ENCODE measurements at regions of chr1 and their contacts with region 1.

Region 1: DNA sequence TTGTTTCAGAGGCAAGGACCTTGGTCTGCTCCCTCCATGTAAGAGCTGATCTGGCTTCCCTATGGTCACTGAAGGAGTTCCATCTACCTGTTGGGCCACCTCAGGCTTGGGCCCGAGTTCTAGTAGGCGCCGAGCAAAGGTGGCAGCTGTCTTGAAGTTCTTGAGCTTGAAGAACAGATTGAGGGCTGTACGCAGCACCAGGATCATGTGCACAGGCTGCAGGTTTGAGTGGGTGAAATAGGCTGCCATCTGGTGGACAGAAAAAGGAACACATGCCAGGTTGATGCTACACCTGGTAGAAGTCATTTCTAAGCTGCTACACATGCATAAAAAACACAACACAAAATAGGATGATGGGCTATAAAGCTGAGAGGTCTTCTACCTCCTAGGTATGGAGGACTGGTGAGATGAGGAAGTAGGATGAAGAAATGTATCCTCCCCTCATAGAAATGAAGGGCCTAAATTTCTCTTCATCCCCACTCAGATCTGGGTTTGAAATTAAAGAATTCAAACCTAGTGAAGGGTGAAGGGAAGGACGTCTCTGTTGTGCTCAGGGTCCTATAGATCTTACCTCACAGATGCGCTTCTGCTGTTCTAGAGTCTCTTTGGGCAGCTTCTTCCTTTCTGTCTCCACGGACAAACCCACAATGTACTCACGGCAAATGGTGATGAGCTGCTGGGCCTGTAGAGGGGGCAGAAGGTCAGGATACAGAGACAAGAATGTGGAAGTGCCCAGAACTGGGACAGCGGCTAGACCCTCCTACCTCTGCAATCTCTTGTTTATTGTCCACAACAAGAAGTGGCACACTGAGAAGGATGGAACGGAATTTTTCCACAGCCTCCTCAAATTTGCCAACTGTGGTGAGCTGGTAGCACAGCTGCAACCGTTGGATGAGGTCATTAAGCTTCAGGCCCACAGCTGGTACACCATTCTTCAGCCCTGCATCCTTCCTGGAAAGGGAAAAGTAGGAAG is 6.6 kb upstream of the PEX19 start:
- DNase-seq: no peak
- H3K4me3 ChIP-seq: no peak overlapping the region
- CTCF ChIP-seq: peak; percentile 75

Region 2: GRCh38 chr1:160085686-160086455 is 205.7 kb before region 1 on chr1:
- CTCF ChIA-PET with region 1: interaction called, 32 read pairs
- POLR2A ChIA-PET with region 1: no interaction called
- DNase-seq: no peak
- H3K4me3 ChIP-seq: no peak overlapping the region
- CTCF ChIP-seq: peak; percentile 91

Region 3: GRCh38 chr1:160161965-160162705 is 129.4 kb before region 1 on chr1:
- CTCF ChIA-PET with region 1: interaction called, 11 read pairs
- POLR2A ChIA-PET with region 1: no interaction called
- DNase-seq: no peak
- H3K4me3 ChIP-seq: no peak overlapping the region
- CTCF ChIP-seq: peak; percentile 64

Region 4: GRCh38 chr1:160219062-160219929 is 72.2 kb before region 1 on chr1:
- CTCF ChIA-PET with region 1: interaction called, 12 read pairs
- POLR2A ChIA-PET with region 1: no interaction called
- DNase-seq: peak; percentile 36
- H3K4me3 ChIP-seq: no peak overlapping the region
- CTCF ChIP-seq: peak; percentile 79

Region 5: DNA sequence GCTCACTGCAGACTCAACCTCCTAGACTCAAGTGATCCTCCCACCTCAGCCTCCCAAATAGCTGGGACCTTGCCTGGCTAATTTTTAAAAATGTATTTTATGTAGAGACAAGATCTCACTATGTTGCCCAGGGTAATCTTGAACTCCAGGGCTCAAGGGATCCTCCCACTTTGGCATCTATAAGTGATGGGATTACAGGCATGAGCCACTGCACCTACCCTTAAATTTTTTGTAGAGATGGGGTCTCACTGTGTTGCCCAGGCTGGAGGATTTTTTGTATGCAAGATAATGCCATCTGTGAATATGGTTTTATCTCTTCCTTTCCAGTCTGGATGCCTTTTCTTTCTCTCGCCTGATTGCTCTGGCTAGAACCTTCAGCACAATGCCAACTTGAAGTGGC is 20.5 kb before region 1 on chr1:
- CTCF ChIA-PET with region 1: interaction called, 21 read pairs
- POLR2A ChIA-PET with region 1: no interaction called
- DNase-seq: no peak
- H3K4me3 ChIP-seq: no peak overlapping the region
- CTCF ChIP-seq: no peak

Region 6: GRCh38 chr1:160328184-160328583 is 36.6 kb after region 1 on chr1:
- CTCF ChIA-PET with region 1: interaction called, 71 read pairs
- POLR2A ChIA-PET with region 1: no interaction called
- DNase-seq: no peak
- H3K4me3 ChIP-seq: no peak overlapping the region
- CTCF ChIP-seq: no peak